Posterior vena cava (tissue), 2 donors: ENCODE measurements at regions of chr5 and their contacts with region 1.

Region 1: GRCh38 chr5:6745706-6746222 is 32.5 kb downstream of the TENT4A start:
- DNase-seq: no peak

Region 2: DNA sequence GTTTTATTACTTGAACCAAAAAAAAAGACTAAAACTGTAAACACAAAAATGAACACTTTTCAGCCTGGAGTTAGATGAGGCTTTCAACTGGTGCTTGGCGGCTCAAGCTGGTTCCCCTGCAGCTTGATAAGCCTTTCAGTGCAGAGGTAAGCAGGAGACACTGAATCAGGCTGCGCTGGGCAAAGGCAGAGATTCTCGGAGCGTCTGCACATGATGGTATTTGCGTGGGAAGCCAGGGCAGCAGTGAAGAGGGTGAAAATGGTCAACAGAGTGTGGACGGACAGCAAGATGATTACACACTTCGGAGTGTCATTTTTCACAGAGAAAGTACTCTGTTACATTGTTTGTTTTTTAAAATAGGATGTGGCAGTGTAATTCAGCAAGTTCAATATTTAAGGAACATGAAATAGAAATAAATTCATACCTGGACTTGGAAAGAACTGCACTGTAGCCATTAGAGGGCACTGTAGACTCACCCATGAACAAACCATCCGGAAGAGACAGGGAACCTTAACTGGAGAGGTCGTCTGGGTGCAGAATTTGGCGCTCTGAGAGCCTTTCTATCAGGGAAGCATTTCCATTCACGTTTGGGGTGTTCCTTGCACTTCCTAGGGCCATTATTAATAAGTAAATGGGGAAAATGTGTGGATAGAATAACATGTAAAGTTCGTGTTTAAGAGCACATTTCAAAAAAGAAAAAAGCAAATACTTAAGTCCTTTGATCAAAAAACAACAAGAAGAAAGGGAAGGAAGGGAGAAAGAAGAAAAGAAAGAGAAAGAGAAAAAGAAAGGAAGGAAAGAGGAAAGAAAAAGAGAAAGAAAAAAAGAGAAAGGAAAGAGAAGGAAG is 1253.5 kb before region 1 on chr5:
- intact Hi-C with region 1: loop called in 1 of 2 experiments (anchors 10 kb)
- DNase-seq: no peak

Region 3: DNA sequence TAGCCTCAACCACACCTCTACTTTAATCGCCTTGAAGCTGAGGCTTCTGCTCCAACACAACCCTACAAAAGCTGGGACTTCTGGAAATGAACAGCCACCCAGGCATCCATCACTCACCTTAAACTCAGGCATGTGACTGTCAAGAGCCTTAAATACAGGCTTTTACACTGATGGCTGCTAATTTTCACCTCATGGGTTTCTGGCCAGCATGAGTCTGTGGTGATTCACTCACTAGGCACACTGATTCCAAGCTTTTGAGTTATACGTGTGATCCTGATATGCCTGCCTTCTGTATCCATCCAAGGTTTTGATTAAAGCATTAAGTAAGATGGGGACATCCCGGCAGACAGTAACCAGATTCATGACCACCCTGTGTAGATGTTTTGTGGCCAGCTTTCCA is 121.8 kb before region 1 on chr5:
- intact Hi-C with region 1: loop called in 1 of 2 experiments (anchors 10 kb)
- DNase-seq: no peak

Region 4: GRCh38 chr5:6632917-6633468 is 112.8 kb before region 1 on chr5 and contains the starts of genes NSUN2 and SRD5A1:
- intact Hi-C with region 1: loop called (anchors 10 kb)
- DNase-seq: peak; percentile 97
- total RNA-seq, gene NSUN2: 31.6 to 35.2 TPM
- total RNA-seq, gene SRD5A1: 4.0 to 4.2 TPM